Mammary epithelial cell (primary cell): ENCODE measurements at regions of chr15 and their contacts with region 1.

Region 1: DNA sequence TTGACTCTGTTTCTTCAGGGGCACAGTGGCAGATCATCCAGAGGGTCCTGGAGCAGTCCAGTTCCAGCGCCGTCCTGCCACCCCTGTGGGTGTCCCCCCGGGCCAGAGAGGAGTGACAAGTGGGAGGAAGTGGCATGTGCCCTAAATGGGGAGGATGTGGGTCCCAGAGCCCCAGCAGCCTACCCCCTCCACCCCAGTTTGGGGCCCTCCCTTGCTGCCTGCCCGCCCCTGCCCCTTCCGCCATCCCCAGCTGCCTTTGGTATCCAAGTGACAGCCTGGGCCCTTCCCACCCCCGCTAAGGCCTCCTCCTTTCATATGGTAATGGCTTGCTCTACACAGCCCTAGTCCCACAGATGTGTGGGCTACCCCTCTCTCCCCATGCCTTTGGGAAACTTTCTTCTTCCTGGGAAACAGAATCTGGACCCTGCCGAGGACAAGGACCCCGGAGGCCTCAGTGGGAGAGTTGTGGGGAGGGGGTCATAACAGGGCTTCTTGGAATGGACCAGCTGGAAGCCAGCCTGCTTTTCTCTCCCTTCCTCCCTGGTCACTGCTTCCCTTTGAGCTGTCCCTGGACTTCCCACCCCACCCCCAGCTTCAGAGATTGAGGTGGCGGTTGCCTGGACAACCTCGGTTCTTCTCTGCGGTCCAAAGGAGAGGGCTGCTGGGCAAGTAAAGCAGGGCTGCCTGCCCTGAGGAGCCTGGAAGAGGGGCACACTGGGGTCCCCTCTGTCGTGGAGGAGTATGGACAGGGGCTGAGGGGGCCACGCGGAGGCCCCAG is 43.2 kb downstream of the KLHL25 start:
- DNase-seq: no peak
- H3K4me3 ChIP-seq: no peak overlapping the region
- H3K27ac ChIP-seq: no peak overlapping the region
- H3K4me1 ChIP-seq: peaks cover 46% of the 10 kb centered on the region
- H3K27me3 ChIP-seq: no peaks in the 10 kb centered on the region
- CTCF ChIP-seq: no peak

Region 2: DNA sequence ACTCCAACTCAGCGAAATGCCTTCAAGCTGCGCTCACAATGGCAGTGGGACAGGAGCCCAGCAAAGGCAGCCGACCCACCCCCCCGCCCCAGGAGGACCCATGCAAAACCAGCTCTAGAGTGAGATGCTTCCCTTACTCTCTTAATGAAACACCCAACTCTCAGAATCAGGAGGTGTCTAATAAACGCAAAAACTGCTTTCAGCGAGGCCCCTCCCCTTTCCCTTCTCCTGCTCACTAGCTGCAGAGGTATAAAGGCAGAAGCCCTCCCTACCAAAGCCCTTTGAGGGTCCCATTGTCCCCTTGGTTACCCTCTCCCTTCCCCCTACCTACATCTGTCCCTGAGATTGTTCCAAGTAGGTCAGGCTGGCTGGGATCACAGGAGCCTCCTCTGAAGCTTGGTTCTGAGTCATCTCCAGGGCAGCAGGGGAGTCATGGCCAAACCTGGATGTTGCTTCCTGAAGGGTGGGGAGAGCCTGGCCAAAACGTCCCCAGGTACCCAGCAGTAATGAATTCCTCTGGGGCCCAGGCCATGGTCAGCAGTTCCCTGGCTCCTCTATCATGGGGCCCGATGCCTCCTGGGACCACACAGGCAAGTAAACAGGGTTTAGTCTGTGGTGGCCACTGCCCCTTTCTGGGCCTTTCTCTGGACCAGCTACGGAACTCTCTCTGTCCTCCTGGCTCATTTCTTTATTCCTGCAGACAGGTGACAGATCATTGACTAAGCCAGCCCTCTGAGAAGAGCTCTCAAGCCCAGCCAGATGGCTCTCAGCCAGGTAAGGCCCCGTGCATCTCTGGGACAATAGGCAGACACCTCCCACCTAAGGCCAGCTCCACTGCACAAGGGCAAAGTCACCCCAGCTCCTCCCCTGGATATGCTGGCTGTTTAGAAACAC is 34.6 kb after region 1 on chr15:
- CTCF ChIA-PET with region 1: no interaction called
- dilution Hi-C with region 1: no loop called
- in situ Hi-C with region 1: no loop called
- intact Hi-C with region 1: loop called (anchors 1 kb)
- DNase-seq: peak; percentile 71
- H3K4me3 ChIP-seq: no peak overlapping the region
- H3K27ac ChIP-seq: peak overlapping the region; percentile 48
- H3K4me1 ChIP-seq: peaks cover 32% of the 10 kb centered on the region
- H3K27me3 ChIP-seq: no peaks in the 10 kb centered on the region
- CTCF ChIP-seq: no peak

Region 3: GRCh38 chr15:85794603-85795336 is 43.2 kb after region 1 on chr15 and contains the start of gene KLHL25:
- CTCF ChIA-PET with region 1: no interaction called
- dilution Hi-C with region 1: no loop called
- in situ Hi-C with region 1: no loop called
- intact Hi-C with region 1: loop called (anchors 1 kb)
- DNase-seq: peak; percentile 94
- H3K4me3 ChIP-seq: peak within 1 kb of the TSS; percentile 76 to 82 (median 78)
- H3K27ac ChIP-seq: peak within 1 kb of the TSS; percentile 54
- H3K4me1 ChIP-seq: peaks cover 16% of the 10 kb centered on the region
- H3K27me3 ChIP-seq: no peaks in the 10 kb centered on the region
- CTCF ChIP-seq: no peak
- total RNA-seq, gene KLHL25: 7.7 to 12.2 TPM